B cell (primary cell): ENCODE measurements at regions of chr6 and their contacts with region 1.

Region 1: DNA sequence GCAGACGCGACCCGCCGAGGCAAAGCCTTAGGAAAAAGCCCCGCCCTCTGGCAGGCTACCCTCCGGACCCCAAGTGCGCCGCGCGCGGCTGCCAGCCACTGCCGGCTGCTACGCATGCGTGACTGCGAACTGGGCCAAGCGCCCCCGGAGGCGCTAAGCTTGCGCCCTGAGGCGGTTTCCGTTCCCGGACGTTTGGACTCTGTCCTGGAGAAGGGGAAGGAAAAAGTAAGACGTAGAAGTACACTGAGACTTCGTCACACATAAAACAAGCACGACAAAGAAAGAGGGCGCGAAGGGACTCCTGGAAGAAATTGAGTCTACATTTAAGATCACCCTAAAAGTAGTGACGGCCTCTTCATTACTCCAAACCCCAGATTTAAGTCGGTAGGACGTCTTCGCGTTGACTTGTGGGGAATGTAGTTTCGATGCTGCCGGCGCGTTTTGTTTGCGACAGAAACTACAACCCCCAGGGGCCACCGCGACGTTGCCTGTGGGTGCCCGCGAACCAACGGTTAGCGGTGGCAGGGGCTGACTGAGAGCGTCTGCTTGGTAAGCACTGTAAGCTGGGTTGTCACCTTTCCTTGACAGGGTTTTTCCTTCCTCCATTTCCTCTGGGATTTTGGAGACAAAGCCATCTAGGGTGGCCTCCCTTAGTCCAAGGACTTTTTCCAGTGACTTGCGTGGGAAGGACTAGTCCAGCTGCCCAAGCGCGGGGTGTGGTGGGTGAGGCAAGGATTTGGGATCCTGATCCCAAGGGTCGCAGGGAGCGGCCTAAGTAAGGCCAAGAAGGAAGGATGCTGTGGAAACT is at the start of gene CEP57L1:
- DNase-seq: peak; percentile 97
- ATAC-seq: peak; percentile 67
- H3K4me3 ChIP-seq: peak within 1 kb of the TSS; percentile 69 to 98 (median 85)
- H3K4me3 Mint-ChIP-seq: peak within 1 kb of the TSS; percentile 99
- H3K27ac ChIP-seq: peak within 1 kb of the TSS; percentile 95 to 98
- H3K27ac Mint-ChIP-seq: peak within 1 kb of the TSS; percentile 100
- H3K4me1 ChIP-seq: peaks cover 28 to 29% of the 10 kb centered on the region in 2 donors
- H3K4me1 Mint-ChIP-seq: peaks cover 44% of the 10 kb centered on the region
- H3K27me3 ChIP-seq: no peaks in the 10 kb centered on the region
- H3K27me3 Mint-ChIP-seq: no peaks in the 10 kb centered on the region
- CTCF ChIP-seq: no peak
- total RNA-seq, gene CEP57L1: 7.7 and 8.8 TPM in 2 replicates

Region 2: DNA sequence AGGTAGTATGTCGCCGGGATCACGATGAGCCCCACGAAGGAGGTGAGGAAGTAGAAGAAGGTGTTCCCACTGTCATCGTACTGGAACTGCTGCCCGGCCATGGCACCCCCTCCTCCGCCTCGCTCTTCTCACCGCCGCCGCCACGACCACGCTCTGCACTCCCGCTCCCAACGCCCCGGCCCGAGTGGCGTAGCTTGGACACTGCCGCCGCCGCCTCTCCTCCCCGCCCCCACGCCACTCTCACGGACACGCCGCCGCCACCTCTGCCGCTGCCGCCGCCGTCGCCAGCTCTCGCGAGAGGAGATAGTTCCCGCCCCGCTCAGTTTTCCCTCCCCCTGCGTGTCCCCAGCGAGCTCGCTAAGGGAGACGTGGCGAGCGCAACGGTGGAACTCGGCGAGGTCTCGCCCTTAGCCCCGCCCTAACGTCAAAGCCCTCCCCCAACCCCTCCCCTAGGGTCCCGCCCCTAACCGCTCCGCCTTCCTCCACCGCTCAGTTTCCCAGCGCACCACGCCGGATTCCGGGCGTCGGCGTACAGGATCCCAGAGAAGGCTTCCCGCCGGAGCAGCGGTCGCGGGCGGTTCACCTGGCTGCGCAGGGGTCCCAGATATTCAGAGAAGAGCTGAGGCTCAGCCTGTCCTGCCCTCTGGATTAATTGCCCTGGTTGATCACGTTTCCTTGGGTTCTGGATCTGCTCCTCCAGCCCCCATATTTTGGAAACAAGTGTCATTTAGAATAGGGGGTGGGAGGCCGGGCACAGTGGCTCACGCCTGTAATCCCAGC is 1137.1 kb before region 1 on chr6 and contains the start of gene SEC63:
- CTCF ChIA-PET with region 1: no interaction called
- POLR2A ChIA-PET with region 1: no interaction called
- intact Hi-C with region 1: loop called (anchors 10 kb)
- DNase-seq: peak; percentile 96
- ATAC-seq: peak; percentile 97
- H3K4me3 ChIP-seq: peak within 1 kb of the TSS; percentile 71 to 96 (median 77)
- H3K4me3 Mint-ChIP-seq: peak within 1 kb of the TSS; percentile 94
- H3K27ac ChIP-seq: peak within 1 kb of the TSS; percentile 60 to 73
- H3K27ac Mint-ChIP-seq: peak within 1 kb of the TSS; percentile 94
- H3K4me1 ChIP-seq: peaks cover 12 to 21% of the 10 kb centered on the region in 2 donors
- H3K4me1 Mint-ChIP-seq: peaks cover 27% of the 10 kb centered on the region
- H3K27me3 ChIP-seq: no peaks in the 10 kb centered on the region
- H3K27me3 Mint-ChIP-seq: no peaks in the 10 kb centered on the region
- CTCF ChIP-seq: no peak
- total RNA-seq, gene SEC63: 74.2 and 79.5 TPM in 2 replicates

Region 3: GRCh38 chr6:108260809-108261569 is 834.2 kb before region 1 on chr6 and contains the start of gene SNX3:
- CTCF ChIA-PET with region 1: interaction called, 3 read pairs
- POLR2A ChIA-PET with region 1: interaction called, 7 read pairs
- intact Hi-C with region 1: loop called (anchors 1 kb)
- DNase-seq: peak; percentile 99
- ATAC-seq: peak; percentile 90
- H3K4me3 ChIP-seq: peak within 1 kb of the TSS; percentile 95 to 99 (median 96)
- H3K4me3 Mint-ChIP-seq: peak within 1 kb of the TSS; percentile 89
- H3K27ac ChIP-seq: peak within 1 kb of the TSS; percentile 91 to 97
- H3K27ac Mint-ChIP-seq: peak within 1 kb of the TSS; percentile 93
- H3K4me1 ChIP-seq: peaks cover 30 to 35% of the 10 kb centered on the region in 2 donors
- H3K4me1 Mint-ChIP-seq: peaks cover 30% of the 10 kb centered on the region
- H3K27me3 ChIP-seq: no peaks in the 10 kb centered on the region
- H3K27me3 Mint-ChIP-seq: no peaks in the 10 kb centered on the region
- CTCF ChIP-seq: no peak
- total RNA-seq, gene SNX3: 95.3 and 96.0 TPM in 2 replicates

Region 4: DNA sequence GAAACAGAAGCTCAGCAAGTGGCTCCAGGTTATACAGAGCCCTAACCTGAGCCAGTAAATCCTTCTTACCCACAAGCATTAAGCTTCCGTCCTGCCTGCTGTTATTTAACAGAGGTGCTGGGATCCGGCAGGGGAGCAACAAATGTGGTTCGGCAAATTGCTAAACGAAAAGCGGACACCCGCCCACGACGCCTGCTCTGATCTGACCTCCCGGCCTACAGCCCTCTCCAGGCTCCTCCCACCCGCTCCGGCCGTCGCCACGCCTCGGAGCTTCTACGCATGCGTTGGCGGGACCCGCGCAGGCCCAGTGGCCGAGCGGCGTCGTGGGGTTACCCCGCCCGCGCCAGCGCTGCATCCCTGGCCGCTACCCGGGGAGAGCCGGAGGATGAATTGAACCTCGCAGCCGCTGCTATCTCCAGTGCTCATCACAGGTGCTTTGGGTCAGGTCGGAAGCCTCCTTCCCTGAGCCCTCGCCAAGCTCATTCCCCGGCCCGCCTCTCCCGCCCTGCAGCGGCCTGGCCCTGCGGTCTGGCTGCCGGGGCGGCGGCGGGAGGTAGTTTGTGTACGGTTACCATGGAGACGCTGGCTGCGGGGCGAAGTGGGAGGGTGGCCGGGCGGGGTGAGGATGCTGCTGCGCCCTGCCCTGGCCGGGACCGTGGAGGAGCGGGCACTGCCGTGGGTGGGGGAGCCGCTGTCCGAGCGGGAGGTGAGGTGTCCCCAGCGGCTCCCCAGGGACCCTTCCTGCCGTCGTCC is 246.9 kb before region 1 on chr6 and contains the start of gene ARMC2:
- CTCF ChIA-PET with region 1: no interaction called
- POLR2A ChIA-PET with region 1: interaction called, 4 read pairs
- intact Hi-C with region 1: loop called (anchors 2 kb)
- DNase-seq: peak; percentile 95
- ATAC-seq: peak; percentile 93
- H3K4me3 ChIP-seq: peak within 1 kb of the TSS; percentile 53 to 85 (median 78)
- H3K4me3 Mint-ChIP-seq: peak within 1 kb of the TSS; percentile 93
- H3K27ac ChIP-seq: peak within 1 kb of the TSS; percentile 48 to 77
- H3K27ac Mint-ChIP-seq: peak within 1 kb of the TSS; percentile 94
- H3K4me1 ChIP-seq: peaks cover 9 to 12% of the 10 kb centered on the region in 2 donors
- H3K4me1 Mint-ChIP-seq: peaks cover 13% of the 10 kb centered on the region
- H3K27me3 ChIP-seq: peaks cover 0 to 2% (median 0%) of the 10 kb centered on the region in 4 experiments
- H3K27me3 Mint-ChIP-seq: no peaks in the 10 kb centered on the region
- CTCF ChIP-seq: no peak
- total RNA-seq, gene ARMC2: 4.9 and 9.9 TPM in 2 replicates

Region 5: GRCh38 chr6:108961985-108962384 is 133.2 kb before region 1 on chr6:
- CTCF ChIA-PET with region 1: no interaction called
- POLR2A ChIA-PET with region 1: no interaction called
- intact Hi-C with region 1: no loop called
- DNase-seq: no peak
- ATAC-seq: no peak
- H3K4me3 ChIP-seq: no peak overlapping the region
- H3K4me3 Mint-ChIP-seq: no peak overlapping the region
- H3K27ac ChIP-seq: no peak overlapping the region
- H3K27ac Mint-ChIP-seq: no peak overlapping the region
- H3K4me1 ChIP-seq: peaks cover 13 to 17% of the 10 kb centered on the region in 2 donors
- H3K4me1 Mint-ChIP-seq: peaks cover 14% of the 10 kb centered on the region
- H3K27me3 ChIP-seq: no peaks in the 10 kb centered on the region
- H3K27me3 Mint-ChIP-seq: no peaks in the 10 kb centered on the region
- CTCF ChIP-seq: no peak

Region 6: DNA sequence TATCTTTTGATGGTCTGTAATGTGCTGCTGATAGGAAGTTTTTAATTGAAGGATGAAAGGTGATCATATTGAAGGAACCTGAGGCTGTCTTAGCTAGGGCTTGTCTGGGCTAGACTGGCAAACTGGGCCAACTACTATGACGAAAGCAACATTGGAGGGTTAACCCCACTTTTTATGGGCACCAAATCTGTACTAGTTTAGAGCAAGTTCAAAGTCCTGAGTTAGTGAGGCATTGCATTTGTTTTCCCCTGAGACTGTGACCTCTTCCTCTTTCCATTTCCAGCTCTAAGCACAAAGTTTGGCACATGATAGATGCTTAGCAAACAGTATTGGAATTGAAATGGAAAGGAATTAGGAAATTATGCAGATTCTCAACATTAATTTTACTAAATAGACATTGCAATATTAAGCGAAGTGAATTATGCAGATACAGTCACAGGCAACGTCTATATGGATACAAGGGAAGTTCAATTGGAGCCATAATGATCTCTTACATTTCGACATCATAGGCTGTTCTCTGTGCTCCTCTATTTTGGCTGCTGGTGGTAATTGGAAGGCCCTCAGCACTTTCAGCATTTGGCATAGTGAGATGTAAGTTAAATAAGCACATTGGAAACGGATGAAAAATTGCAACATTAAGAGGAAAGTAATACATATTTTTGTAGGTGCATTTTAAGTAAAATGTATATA is 22.3 kb after region 1 on chr6:
- CTCF ChIA-PET with region 1: no interaction called
- POLR2A ChIA-PET with region 1: interaction called, 4 read pairs
- intact Hi-C with region 1: loop called (anchors 1 kb)
- DNase-seq: peak; percentile 88
- ATAC-seq: peak; percentile 96
- H3K4me3 ChIP-seq: no peak overlapping the region
- H3K4me3 Mint-ChIP-seq: peak overlapping the region; percentile 26
- H3K27ac ChIP-seq: peak overlapping the region; percentile 11 to 52
- H3K27ac Mint-ChIP-seq: peak overlapping the region; percentile 39
- H3K4me1 ChIP-seq: peaks cover 25 to 41% of the 10 kb centered on the region in 2 donors
- H3K4me1 Mint-ChIP-seq: peaks cover 44% of the 10 kb centered on the region
- H3K27me3 ChIP-seq: no peaks in the 10 kb centered on the region
- H3K27me3 Mint-ChIP-seq: no peaks in the 10 kb centered on the region
- CTCF ChIP-seq: no peak

Region 7: GRCh38 chr6:109440331-109441068 is 345.3 kb after region 1 on chr6 and contains the starts of genes PPIL6 and SMPD2:
- CTCF ChIA-PET with region 1: no interaction called
- POLR2A ChIA-PET with region 1: interaction called, 6 read pairs
- intact Hi-C with region 1: loop called (anchors 1 kb)
- DNase-seq: peak; percentile 94
- ATAC-seq: peak; percentile 87
- H3K4me3 ChIP-seq: peak within 1 kb of the TSS; percentile 0 to 93 (median 90)
- H3K4me3 Mint-ChIP-seq: peak within 1 kb of the TSS; percentile 97
- H3K27ac ChIP-seq: peak within 1 kb of the TSS; percentile 79 to 98
- H3K27ac Mint-ChIP-seq: peak within 1 kb of the TSS; percentile 96
- H3K4me1 ChIP-seq: peaks cover 21 to 30% of the 10 kb centered on the region in 2 donors
- H3K4me1 Mint-ChIP-seq: peaks cover 31% of the 10 kb centered on the region
- H3K27me3 ChIP-seq: no peaks in the 10 kb centered on the region
- H3K27me3 Mint-ChIP-seq: no peaks in the 10 kb centered on the region
- CTCF ChIP-seq: no peak
- total RNA-seq, gene PPIL6: 0.53 and 1.8 TPM in 2 replicates
- total RNA-seq, gene SMPD2: 35.7 and 36.4 TPM in 2 replicates

Region 8: GRCh38 chr6:109482905-109483735 is 387.9 kb after region 1 on chr6 and contains the start of gene ZBTB24:
- CTCF ChIA-PET with region 1: no interaction called
- POLR2A ChIA-PET with region 1: interaction called, 3 read pairs
- intact Hi-C with region 1: loop called (anchors 2 kb)
- DNase-seq: peak; percentile 93
- ATAC-seq: peak; percentile 83
- H3K4me3 ChIP-seq: peak within 1 kb of the TSS; percentile 76 to 97 (median 94)
- H3K4me3 Mint-ChIP-seq: peak within 1 kb of the TSS; percentile 96
- H3K27ac ChIP-seq: peak within 1 kb of the TSS; percentile 65 to 81
- H3K27ac Mint-ChIP-seq: peak within 1 kb of the TSS; percentile 89
- H3K4me1 ChIP-seq: peaks cover 40 to 57% of the 10 kb centered on the region in 2 donors
- H3K4me1 Mint-ChIP-seq: peaks cover 50% of the 10 kb centered on the region
- H3K27me3 ChIP-seq: no peaks in the 10 kb centered on the region
- H3K27me3 Mint-ChIP-seq: no peaks in the 10 kb centered on the region
- CTCF ChIP-seq: no peak
- total RNA-seq, gene ZBTB24: 31.4 and 32.9 TPM in 2 replicates